MCF 10A (cell line): ENCODE measurements at regions of chr11 and their contacts with region 1.

Region 1: GRCh38 chr11:68509066-68509465 is 48.5 kb downstream of the PPP6R3 start:
- DNase-seq: no peak
- H3K4me3 Mint-ChIP-seq: no peak overlapping the region
- H3K27ac Mint-ChIP-seq: no peak overlapping the region
- H3K4me1 Mint-ChIP-seq: peaks cover 18% of the 10 kb centered on the region
- H3K27me3 Mint-ChIP-seq: no peaks in the 10 kb centered on the region
- CTCF ChIP-seq: no peak

Region 2: GRCh38 chr11:68525930-68526329 is 16.9 kb after region 1 on chr11:
- CTCF ChIA-PET with region 1: no interaction called
- POLR2A ChIA-PET with region 1: interaction called, 17 read pairs
- intact Hi-C with region 1: no loop called
- DNase-seq: peak; percentile 82
- H3K4me3 Mint-ChIP-seq: no peak overlapping the region
- H3K27ac Mint-ChIP-seq: no peak overlapping the region
- H3K4me1 Mint-ChIP-seq: peaks cover 30% of the 10 kb centered on the region
- H3K27me3 Mint-ChIP-seq: no peaks in the 10 kb centered on the region
- CTCF ChIP-seq: no peak